HepG2 (cell line): ENCODE measurements at regions of chr15 and their contacts with region 1.

Region 1: GRCh38 chr15:80856809-80857377 is 77.7 kb downstream of the CEMIP start:
- DNase-seq: peak; percentile 97
- ATAC-seq: peak; percentile 99
- H3K4me3 ChIP-seq: no peak overlapping the region
- H3K27ac ChIP-seq: peak overlapping the region; percentile 74
- H3K4me1 ChIP-seq: peaks cover 66% of the 10 kb centered on the region
- H3K27me3 ChIP-seq: no peaks in the 10 kb centered on the region
- CTCF ChIP-seq: no peak
- EP300 ChIP-seq: peak in 1 of 2 experiments; percentile 91; a peak in 2 of 4 replicates
- POLR2A ChIP-seq: no peak
- RAD21 ChIP-seq: 0 out of 2 replicates have a peak, but pooled peaks have one; percentile 17

Region 2: GRCh38 chr15:80660122-80660521 is 196.8 kb before region 1 on chr15:
- CTCF ChIA-PET with region 1: no interaction called
- POLR2A ChIA-PET with region 1: no interaction called
- in situ Hi-C with region 1: no loop called
- intact Hi-C with region 1: loop called (anchors 2 kb)
- DNase-seq: peak; percentile 42
- ATAC-seq: peak; percentile 96
- H3K4me3 ChIP-seq: no peak overlapping the region
- H3K27ac ChIP-seq: no peak overlapping the region
- H3K4me1 ChIP-seq: no peaks in the 10 kb centered on the region
- H3K27me3 ChIP-seq: no peaks in the 10 kb centered on the region
- CTCF ChIP-seq: peak; percentile 77
- EP300 ChIP-seq: no peak
- POLR2A ChIP-seq: no peak
- RAD21 ChIP-seq: 0 out of 2 replicates have a peak, but pooled peaks have one; percentile 40

Region 3: DNA sequence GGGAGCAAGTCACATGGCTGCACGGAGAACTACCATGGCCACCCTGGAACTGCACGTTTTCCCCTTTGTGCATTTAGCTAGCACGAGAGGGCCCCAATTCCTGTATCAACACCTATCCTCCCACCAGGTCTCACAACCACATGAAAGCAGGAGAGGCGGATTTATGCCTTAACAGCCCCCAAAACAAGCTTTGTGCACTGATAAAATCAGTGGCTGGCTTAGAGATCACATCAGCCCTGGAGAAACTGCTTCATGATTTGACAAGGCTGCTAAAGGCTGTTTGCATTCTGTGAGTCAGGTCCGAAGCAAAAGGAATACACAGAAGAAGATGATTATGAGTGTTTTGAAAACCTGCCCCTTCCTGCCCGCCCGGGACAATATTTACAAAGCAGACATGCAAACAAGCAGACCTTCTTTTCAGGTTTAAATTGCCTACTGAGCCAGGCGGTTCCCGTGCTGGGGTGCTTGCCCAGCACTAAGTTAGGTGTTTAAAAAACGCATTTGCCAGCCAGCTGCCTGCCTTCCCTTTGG is 51.9 kb before region 1 on chr15:
- CTCF ChIA-PET with region 1: no interaction called
- POLR2A ChIA-PET with region 1: interaction called, 6 read pairs
- in situ Hi-C with region 1: no loop called
- intact Hi-C with region 1: loop called (anchors 1 kb)
- DNase-seq: peak; percentile 98
- ATAC-seq: peak; percentile 95
- H3K4me3 ChIP-seq: peak overlapping the region in 1 of 3 experiments; percentile 23; a peak in 2 of 6 replicates
- H3K27ac ChIP-seq: peak overlapping the region; percentile 59
- H3K4me1 ChIP-seq: peaks cover 41% of the 10 kb centered on the region
- H3K27me3 ChIP-seq: no peaks in the 10 kb centered on the region
- CTCF ChIP-seq: peak; percentile 27; the same call in 1 of the 2 replicates
- EP300 ChIP-seq: peak; percentile 58 to 90; a peak in 3 of 4 replicates
- POLR2A ChIP-seq: no peak
- RAD21 ChIP-seq: no peak

Region 4: DNA sequence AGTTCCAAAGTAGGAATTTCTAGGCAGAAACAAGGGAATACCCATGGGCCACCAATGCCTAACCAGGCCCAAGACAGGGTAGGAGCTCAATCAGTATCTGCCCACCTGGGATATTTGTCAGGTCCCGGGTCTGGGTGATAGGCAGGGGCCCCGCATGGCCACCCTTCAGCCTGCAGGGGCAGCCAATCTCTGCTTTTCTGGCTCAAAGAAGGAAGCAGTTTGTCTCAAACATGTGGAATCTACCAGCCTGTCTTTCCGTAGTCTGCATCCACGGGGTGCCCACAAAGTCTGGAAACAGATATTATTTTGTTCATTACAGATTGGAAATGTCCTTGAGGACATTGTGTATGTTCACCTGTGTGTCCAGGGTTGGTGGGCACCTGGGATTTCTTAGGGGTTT is 21.6 kb before region 1 on chr15:
- CTCF ChIA-PET with region 1: interaction called, 12 read pairs
- POLR2A ChIA-PET with region 1: interaction called, 53 read pairs
- in situ Hi-C with region 1: no loop called
- intact Hi-C with region 1: loop called (anchors 1 kb)
- DNase-seq: peak; percentile 50
- ATAC-seq: peak; percentile 35
- H3K4me3 ChIP-seq: no peak overlapping the region
- H3K27ac ChIP-seq: peak overlapping the region; percentile 20
- H3K4me1 ChIP-seq: peaks cover 92% of the 10 kb centered on the region
- H3K27me3 ChIP-seq: no peaks in the 10 kb centered on the region
- CTCF ChIP-seq: peak; percentile 51
- EP300 ChIP-seq: no peak
- POLR2A ChIP-seq: no peak
- RAD21 ChIP-seq: peak; percentile 60; the same call in 1 of the 2 replicates

Region 5: GRCh38 chr15:80844011-80844755 is 12.7 kb before region 1 on chr15:
- CTCF ChIA-PET with region 1: interaction called, 3 read pairs
- POLR2A ChIA-PET with region 1: interaction called, 53 read pairs
- in situ Hi-C with region 1: no loop called
- intact Hi-C with region 1: loop called (anchors 1 kb)
- DNase-seq: peak; percentile 45
- ATAC-seq: peak; percentile 8; the same call in 1 of the 3 replicates
- H3K4me3 ChIP-seq: no peak overlapping the region
- H3K27ac ChIP-seq: no peak overlapping the region
- H3K4me1 ChIP-seq: peaks cover 83% of the 10 kb centered on the region
- H3K27me3 ChIP-seq: no peaks in the 10 kb centered on the region
- CTCF ChIP-seq: no peak
- EP300 ChIP-seq: no peak
- POLR2A ChIP-seq: no peak
- RAD21 ChIP-seq: no peak

Region 6: GRCh38 chr15:80893777-80894176 is 36.9 kb after region 1 on chr15:
- CTCF ChIA-PET with region 1: no interaction called
- POLR2A ChIA-PET with region 1: no interaction called
- in situ Hi-C with region 1: no loop called
- intact Hi-C with region 1: no loop called
- DNase-seq: no peak
- ATAC-seq: no peak
- H3K4me3 ChIP-seq: no peak overlapping the region
- H3K27ac ChIP-seq: no peak overlapping the region
- H3K4me1 ChIP-seq: peaks cover 15% of the 10 kb centered on the region
- H3K27me3 ChIP-seq: no peaks in the 10 kb centered on the region
- CTCF ChIP-seq: no peak
- EP300 ChIP-seq: no peak
- POLR2A ChIP-seq: no peak
- RAD21 ChIP-seq: no peak

Region 7: DNA sequence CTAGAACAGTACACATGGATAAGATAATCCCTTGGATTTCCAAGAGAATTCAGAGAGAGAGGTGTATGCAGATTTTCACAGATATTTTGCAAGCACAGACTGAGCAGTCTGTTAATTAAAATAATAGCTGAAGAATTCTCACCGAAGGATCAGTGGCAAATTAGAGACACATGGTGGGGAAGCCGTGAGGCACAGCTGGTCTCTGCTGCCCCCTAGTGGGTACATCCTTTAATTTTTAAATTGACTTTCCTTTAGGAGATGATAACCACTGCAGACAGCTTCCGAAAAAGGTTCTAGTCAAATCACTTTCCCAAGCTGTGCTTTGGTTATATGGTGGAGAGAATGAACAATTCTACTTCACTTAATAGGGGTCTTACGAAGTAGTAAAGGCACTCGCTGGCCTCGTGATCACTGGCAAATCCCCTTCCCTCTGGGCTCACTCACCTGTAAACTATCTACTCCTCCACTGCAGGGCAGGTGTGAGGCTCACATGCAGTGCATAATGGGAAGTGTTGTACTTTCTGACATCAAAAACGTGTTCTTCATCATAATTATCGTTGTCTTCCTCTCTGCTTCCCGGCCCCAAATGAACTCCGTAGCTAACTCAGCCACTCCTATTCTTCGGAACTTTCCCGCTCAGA is 113.2 kb after region 1 on chr15:
- CTCF ChIA-PET with region 1: interaction called, 3 read pairs
- POLR2A ChIA-PET with region 1: interaction called, 3 read pairs
- in situ Hi-C with region 1: no loop called
- intact Hi-C with region 1: loop called (anchors 5 kb)
- DNase-seq: peak; percentile 35
- ATAC-seq: peak; percentile 76
- H3K4me3 ChIP-seq: no peak overlapping the region
- H3K27ac ChIP-seq: no peak overlapping the region
- H3K4me1 ChIP-seq: no peaks in the 10 kb centered on the region
- H3K27me3 ChIP-seq: no peaks in the 10 kb centered on the region
- CTCF ChIP-seq: peak; percentile 81
- EP300 ChIP-seq: no peak
- POLR2A ChIP-seq: no peak
- RAD21 ChIP-seq: peak; percentile 71